Adrenal gland (tissue), 19 donors: ENCODE measurements at regions of chr1 and their contacts with region 1.

Region 1: GRCh38 chr1:110495926-110496600 is 22.9 kb downstream of the KCNA10 start:
- DNase-seq: peak; percentile 77 to 95 (median 88)
- H3K4me3 ChIP-seq: no peak overlapping the region
- H3K27ac ChIP-seq: no peak overlapping the region
- H3K4me1 ChIP-seq: peaks cover 12 to 13% of the 10 kb centered on the region in 2 donors
- H3K27me3 ChIP-seq: no peaks in the 10 kb centered on the region
- CTCF ChIP-seq: peak; percentile 88 to 98 (median 93)
- POLR2A ChIP-seq: no peak

Region 2: GRCh38 chr1:110209715-110210603 is 286.1 kb before region 1 on chr1 and contains the start of gene KCNC4:
- intact Hi-C with region 1: loop called (anchors 10 kb)
- DNase-seq: peak; percentile 90 to 95 (median 91)
- H3K4me3 ChIP-seq: peak within 1 kb of the TSS in 3 of 4 donors; percentile 44 to 89 (median 51)
- H3K27ac ChIP-seq: peak within 1 kb of the TSS; percentile 58 to 94 (median 79)
- H3K4me1 ChIP-seq: peaks cover 13 to 40% of the 10 kb centered on the region in 2 donors
- H3K27me3 ChIP-seq: no peaks in the 10 kb centered on the region
- CTCF ChIP-seq: no peak
- POLR2A ChIP-seq: peak in 1 of 2 donors; percentile 47
- total RNA-seq, gene KCNC4: 1.1 to 14.4 (median 9.7) TPM

Region 3: DNA sequence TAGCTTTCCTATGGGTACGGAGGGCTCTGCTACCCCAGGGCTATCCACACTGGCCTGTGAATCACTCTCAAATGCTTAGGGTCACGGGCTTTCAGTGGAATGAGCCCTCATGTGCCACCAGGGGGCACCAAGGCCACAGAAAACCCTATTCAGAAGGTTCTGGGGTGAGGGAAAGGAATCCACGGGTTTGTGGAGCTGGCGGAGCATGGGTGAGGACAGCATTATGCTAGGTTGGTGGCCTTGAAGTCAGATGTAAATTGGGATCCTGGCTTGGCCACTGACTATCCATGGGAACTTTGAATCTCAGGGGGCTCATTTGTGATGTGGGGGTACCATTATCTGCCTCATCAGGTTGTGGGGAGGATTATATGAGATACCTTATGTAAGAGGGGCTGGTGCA is 83.5 kb before region 1 on chr1:
- intact Hi-C with region 1: loop called in 1 of 2 experiments (anchors 10 kb)
- DNase-seq: peak; percentile 78 to 93 (median 87)
- H3K4me3 ChIP-seq: no peak overlapping the region
- H3K27ac ChIP-seq: peak overlapping the region in 2 of 5 donors; percentile 4 to 46
- H3K4me1 ChIP-seq: peaks cover 0 to 8% of the 10 kb centered on the region in 2 donors
- H3K27me3 ChIP-seq: no peaks in the 10 kb centered on the region
- CTCF ChIP-seq: peak; percentile 79 to 97 (median 91)
- POLR2A ChIP-seq: no peak

Region 4: DNA sequence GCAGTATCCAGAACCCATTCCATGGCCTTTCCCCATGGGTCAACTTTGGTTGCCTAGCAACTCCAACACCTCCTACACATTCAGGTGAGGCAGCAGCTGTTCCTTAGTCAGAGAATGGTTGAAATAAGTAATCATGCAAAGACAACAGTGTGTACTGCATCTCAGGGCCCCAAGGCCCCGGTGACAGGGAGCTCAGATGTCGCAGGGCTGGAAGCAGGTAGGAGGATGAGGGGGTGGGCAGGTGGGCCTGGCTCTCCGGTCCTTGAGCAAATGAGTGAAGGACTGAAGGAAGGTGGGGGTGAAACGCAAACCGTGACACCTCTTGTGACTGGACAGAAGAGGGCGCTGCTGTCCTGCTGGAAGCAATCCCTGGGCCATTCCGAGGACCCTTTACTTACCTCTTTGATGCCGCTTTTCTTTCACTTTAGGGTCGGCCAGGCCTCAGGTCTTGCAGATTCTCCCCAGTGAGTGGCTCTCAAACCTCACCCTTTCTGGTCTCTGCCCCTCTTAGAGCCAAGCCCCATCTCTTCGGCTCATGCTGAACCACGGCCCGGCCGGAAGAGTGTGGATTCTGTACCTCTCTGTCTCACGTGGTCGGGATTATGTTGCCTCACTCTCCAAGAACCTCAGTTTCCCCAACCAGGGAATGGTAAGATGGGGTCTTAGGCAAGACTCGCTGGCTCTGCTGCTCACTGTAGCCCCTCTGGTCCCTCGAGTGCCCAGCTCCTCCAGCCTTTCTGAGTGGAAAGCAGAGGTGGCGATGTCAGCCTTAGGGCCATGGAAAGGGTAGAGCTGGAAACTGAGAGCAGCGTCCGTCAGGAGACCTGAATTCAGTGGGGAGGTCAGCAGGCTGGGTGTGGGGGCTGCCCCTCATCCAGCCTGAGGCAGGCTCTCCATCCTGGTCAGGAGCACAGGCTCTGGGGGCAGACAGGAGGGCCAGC is 28.5 kb after region 1 on chr1:
- intact Hi-C with region 1: no loop called
- DNase-seq: peak; percentile 26 to 64 (median 35)
- H3K4me3 ChIP-seq: no peak overlapping the region
- H3K27ac ChIP-seq: no peak overlapping the region
- H3K4me1 ChIP-seq: no peaks in the 10 kb centered on the region
- H3K27me3 ChIP-seq: peaks cover 6% of the 10 kb centered on the region
- CTCF ChIP-seq: peak; percentile 26 to 70 (median 62)
- POLR2A ChIP-seq: no peak